ENCODE measurements at regions of chr1 and their contacts with region 1.

Region 1: GRCh38 chr1:109620841-109621286 is 1.2 kb downstream of the AMPD2 start:
- DNase-seq: peak; percentile 98

Region 2: GRCh38 chr1:109539676-109540075 is 81.2 kb before region 1 on chr1 and contains the start of gene GPR61:
- intact Hi-C with region 1: loop called (anchors 5 to 10 kb)
- DNase-seq: no peak
- total RNA-seq, gene GPR61: not detected

Region 3: GRCh38 chr1:109548321-109549267 is 72.3 kb before region 1 on chr1 and contains the start of gene GNAI3:
- intact Hi-C with region 1: loop called (anchors 5 to 10 kb)
- DNase-seq: peak; percentile 99
- total RNA-seq, gene GNAI3: 6.8 to 7.5 TPM

Region 4: GRCh38 chr1:109762821-109763645 is 142.2 kb after region 1 on chr1:
- intact Hi-C with region 1: no loop called
- DNase-seq: peak; percentile 75

Region 5: GRCh38 chr1:110262846-110263631 is 642.2 kb after region 1 on chr1:
- intact Hi-C with region 1: no loop called
- DNase-seq: no peak

Measured in posterior vena cava (tissue), 2 donors.